PC-3 (cell line): ENCODE measurements at regions of chr6 and their contacts with region 1.

Region 1: DNA sequence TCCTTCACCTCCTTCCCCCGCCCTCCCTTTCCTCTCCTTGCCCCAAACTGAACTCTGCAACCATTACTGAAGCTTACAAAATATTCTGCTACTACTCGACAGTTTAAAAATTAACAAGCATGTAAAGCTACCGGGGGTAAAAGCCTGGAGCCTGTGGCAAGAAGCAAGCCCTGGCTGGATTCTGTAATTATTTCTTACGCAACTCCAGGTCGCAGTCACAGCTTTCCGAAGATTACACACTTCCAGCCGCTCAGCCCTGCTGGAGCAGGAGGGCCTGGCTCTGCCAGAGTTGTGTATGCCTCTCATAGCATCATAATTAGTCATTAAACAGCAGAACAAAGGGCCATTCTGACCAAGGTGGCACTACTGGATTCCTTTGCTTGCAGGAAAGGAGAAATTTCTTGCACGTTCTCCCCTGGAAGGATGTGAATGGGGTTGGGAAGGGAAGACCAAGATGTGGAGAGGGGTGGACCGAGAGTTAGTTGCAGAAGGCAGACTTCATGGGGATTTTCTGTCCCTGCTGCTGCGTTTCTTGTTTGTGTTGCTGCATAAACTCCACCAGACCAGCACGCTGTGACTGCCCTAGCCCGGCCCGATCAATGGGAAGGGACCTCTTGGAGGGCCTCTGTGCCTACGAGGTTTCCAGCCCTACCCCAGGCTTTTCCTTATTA is 23.6 kb downstream of the FOXQ1 start:
- DNase-seq: peak; percentile 96
- ATAC-seq: peak; percentile 93
- H3K4me3 ChIP-seq: peak overlapping the region; percentile 13; the same call in 1 of the 2 replicates
- H3K27ac ChIP-seq: peak overlapping the region; percentile 75
- H3K4me1 ChIP-seq: peaks cover 43% of the 10 kb centered on the region
- H3K27me3 ChIP-seq: no peaks in the 10 kb centered on the region
- CTCF ChIP-seq: no peak

Region 2: GRCh38 chr6:313087-313486 is 1022.4 kb before region 1 on chr6:
- CTCF ChIA-PET with region 1: no interaction called
- POLR2A ChIA-PET with region 1: no interaction called
- intact Hi-C with region 1: no loop called
- DNase-seq: no peak
- ATAC-seq: no peak
- H3K4me3 ChIP-seq: no peak overlapping the region
- H3K27ac ChIP-seq: no peak overlapping the region
- H3K4me1 ChIP-seq: no peaks in the 10 kb centered on the region
- H3K27me3 ChIP-seq: no peaks in the 10 kb centered on the region
- CTCF ChIP-seq: no peak

Region 3: GRCh38 chr6:722077-722524 is 613.4 kb before region 1 on chr6:
- CTCF ChIA-PET with region 1: interaction called, 3 read pairs
- POLR2A ChIA-PET with region 1: no interaction called
- intact Hi-C with region 1: loop called (anchors 1 kb)
- DNase-seq: peak; percentile 90
- ATAC-seq: peak; percentile 99
- H3K4me3 ChIP-seq: no peak overlapping the region
- H3K27ac ChIP-seq: no peak overlapping the region
- H3K4me1 ChIP-seq: no peaks in the 10 kb centered on the region
- H3K27me3 ChIP-seq: peaks cover 24% of the 10 kb centered on the region
- CTCF ChIP-seq: peak; percentile 94

Region 4: DNA sequence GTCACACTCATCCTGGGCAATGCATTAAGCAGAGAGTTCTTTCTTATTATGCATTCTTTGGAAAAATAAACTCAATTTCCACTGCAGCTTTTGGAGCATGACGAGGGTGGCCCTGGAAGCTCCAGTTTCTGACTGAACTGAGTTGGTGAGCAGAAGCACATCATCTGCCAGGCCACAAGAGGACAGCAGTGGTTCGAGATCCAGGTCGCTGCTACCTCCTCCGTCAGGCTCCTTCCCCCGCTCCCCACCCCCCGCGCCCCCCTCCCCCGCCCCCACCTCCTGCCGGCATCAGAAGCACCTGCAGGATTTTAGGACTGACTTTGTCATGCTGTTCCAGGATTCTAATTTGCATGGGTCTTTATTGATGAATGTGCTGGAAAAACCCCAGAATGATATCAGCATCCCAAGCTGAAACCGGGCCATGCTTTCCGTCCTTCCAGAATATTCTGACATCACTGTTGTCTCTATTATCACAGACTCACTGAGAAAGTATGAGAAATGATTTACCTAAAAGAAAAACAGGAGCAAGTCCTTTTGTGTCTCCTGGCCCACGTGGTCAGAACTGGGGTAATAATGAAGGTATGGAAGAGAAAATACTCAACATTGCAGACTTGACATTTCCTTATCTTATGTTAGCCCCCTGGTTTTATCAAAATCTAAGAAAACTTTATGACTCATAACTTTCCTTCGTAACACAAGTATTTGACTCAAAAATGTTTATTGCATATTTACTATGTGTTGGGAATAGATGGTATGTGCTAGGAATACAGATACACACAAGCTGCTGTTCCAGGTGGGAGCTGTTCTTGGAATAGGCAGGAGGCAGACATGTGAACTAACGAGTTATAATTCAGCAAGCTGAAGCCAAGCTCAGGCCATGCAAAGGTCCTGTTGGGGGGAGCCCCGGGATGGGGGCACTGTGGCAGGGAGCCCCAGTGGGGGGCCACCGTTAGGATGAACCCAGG is 422.3 kb before region 1 on chr6:
- CTCF ChIA-PET with region 1: interaction called, 9 read pairs
- POLR2A ChIA-PET with region 1: no interaction called
- intact Hi-C with region 1: loop called (anchors 1 kb)
- DNase-seq: peak; percentile 44
- ATAC-seq: peak; percentile 64
- H3K4me3 ChIP-seq: no peak overlapping the region
- H3K27ac ChIP-seq: no peak overlapping the region
- H3K4me1 ChIP-seq: no peaks in the 10 kb centered on the region
- H3K27me3 ChIP-seq: peaks cover 69% of the 10 kb centered on the region
- CTCF ChIP-seq: peak; percentile 44

Region 5: DNA sequence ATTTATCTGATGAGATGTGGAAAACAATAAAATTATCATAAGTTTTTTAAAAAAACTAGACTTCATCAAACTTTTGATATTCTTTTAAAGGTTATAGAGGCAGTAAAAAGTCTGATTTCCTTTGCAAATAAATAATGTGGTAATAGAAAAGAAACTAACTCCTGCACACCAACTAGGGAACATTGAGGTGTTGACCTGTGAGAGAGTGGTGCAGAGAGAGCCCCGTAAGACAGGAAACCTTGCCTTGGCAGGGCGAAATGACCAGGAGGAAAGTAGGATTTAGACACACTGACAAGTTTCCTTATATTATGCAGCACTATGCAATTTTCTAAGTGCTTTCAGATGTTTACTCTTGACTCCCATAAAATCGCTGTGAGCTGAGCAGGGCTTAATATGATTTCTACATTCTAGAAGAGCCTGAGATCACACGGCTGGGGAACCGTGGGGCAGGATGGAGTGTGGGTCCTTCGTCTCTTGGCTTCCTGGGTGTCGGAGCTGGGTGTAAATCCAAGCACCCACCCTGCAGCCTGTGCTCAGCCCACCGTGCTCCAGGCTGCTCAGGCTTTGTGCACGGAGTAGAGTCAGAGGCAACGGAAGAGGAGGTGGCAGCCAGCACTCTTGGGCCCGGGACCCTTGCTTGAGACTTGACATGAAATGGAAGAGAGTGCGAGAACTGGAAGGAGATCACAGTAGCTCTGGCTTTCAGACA is 84.9 kb before region 1 on chr6:
- CTCF ChIA-PET with region 1: no interaction called
- POLR2A ChIA-PET with region 1: no interaction called
- intact Hi-C with region 1: loop called (anchors 5 kb)
- DNase-seq: peak; percentile 26
- ATAC-seq: peak; percentile 78
- H3K4me3 ChIP-seq: no peak overlapping the region
- H3K27ac ChIP-seq: no peak overlapping the region
- H3K4me1 ChIP-seq: peaks cover 15% of the 10 kb centered on the region
- H3K27me3 ChIP-seq: peaks cover 50% of the 10 kb centered on the region
- CTCF ChIP-seq: no peak

Region 6: GRCh38 chr6:1368940-1369339 is 33.4 kb after region 1 on chr6:
- CTCF ChIA-PET with region 1: no interaction called
- POLR2A ChIA-PET with region 1: no interaction called
- intact Hi-C with region 1: no loop called
- DNase-seq: no peak
- ATAC-seq: no peak
- H3K4me3 ChIP-seq: no peak overlapping the region
- H3K27ac ChIP-seq: no peak overlapping the region
- H3K4me1 ChIP-seq: no peaks in the 10 kb centered on the region
- H3K27me3 ChIP-seq: peaks cover 82% of the 10 kb centered on the region
- CTCF ChIP-seq: no peak

Region 7: GRCh38 chr6:1381481-1382330 is 46.2 kb after region 1 on chr6:
- CTCF ChIA-PET with region 1: no interaction called
- POLR2A ChIA-PET with region 1: no interaction called
- intact Hi-C with region 1: loop called (anchors 5 kb)
- DNase-seq: peak; percentile 68
- ATAC-seq: peak; percentile 84
- H3K4me3 ChIP-seq: peak overlapping the region; percentile 62; the same call in 1 of the 2 replicates
- H3K27ac ChIP-seq: no peak overlapping the region
- H3K4me1 ChIP-seq: no peaks in the 10 kb centered on the region
- H3K27me3 ChIP-seq: peaks cover 86% of the 10 kb centered on the region
- CTCF ChIP-seq: peak; percentile 78